ENCODE measurements at regions of chr9 and their contacts with region 1.

Region 1: GRCh38 chr9:129036241-129036922 is at the start of gene MIGA2:
- DNase-seq: peak; percentile 97
- H3K4me3 Mint-ChIP-seq: peak within 1 kb of the TSS; percentile 98
- H3K27ac Mint-ChIP-seq: peak within 1 kb of the TSS; percentile 19
- H3K4me1 Mint-ChIP-seq: peaks cover 26% of the 10 kb centered on the region
- H3K27me3 Mint-ChIP-seq: no peaks in the 10 kb centered on the region
- total RNA-seq, gene MIGA2: 26.1 to 26.5 TPM

Region 2: GRCh38 chr9:128669786-128670185 is 366.6 kb before region 1 on chr9:
- CTCF ChIA-PET with region 1: no interaction called
- POLR2A ChIA-PET with region 1: no interaction called
- intact Hi-C with region 1: no loop called
- DNase-seq: no peak
- H3K4me3 Mint-ChIP-seq: no peak overlapping the region
- H3K27ac Mint-ChIP-seq: no peak overlapping the region
- H3K4me1 Mint-ChIP-seq: peaks cover 2% of the 10 kb centered on the region
- H3K27me3 Mint-ChIP-seq: no peaks in the 10 kb centered on the region

Region 3: GRCh38 chr9:129080602-129081387 is 44.4 kb after region 1 on chr9 and contains the start of gene DOLPP1:
- CTCF ChIA-PET with region 1: no interaction called
- POLR2A ChIA-PET with region 1: no interaction called
- intact Hi-C with region 1: loop called (anchors 1 kb)
- DNase-seq: peak; percentile 99
- H3K4me3 Mint-ChIP-seq: peak within 1 kb of the TSS; percentile 83
- H3K27ac Mint-ChIP-seq: peak within 1 kb of the TSS; percentile 42
- H3K4me1 Mint-ChIP-seq: peaks cover 17% of the 10 kb centered on the region
- H3K27me3 Mint-ChIP-seq: no peaks in the 10 kb centered on the region
- total RNA-seq, gene DOLPP1: 13.9 to 15.3 TPM

Region 4: GRCh38 chr9:129110740-129111527 is 74.6 kb after region 1 on chr9 and contains the starts of genes CRAT and PTPA:
- CTCF ChIA-PET with region 1: no interaction called
- POLR2A ChIA-PET with region 1: interaction called, 4 read pairs
- intact Hi-C with region 1: loop called (anchors 2 kb)
- DNase-seq: peak; percentile 98
- H3K4me3 Mint-ChIP-seq: peak within 1 kb of the TSS; percentile 94
- H3K27ac Mint-ChIP-seq: peak within 1 kb of the TSS; percentile 97
- H3K4me1 Mint-ChIP-seq: peaks cover 34% of the 10 kb centered on the region
- H3K27me3 Mint-ChIP-seq: no peaks in the 10 kb centered on the region
- total RNA-seq, gene CRAT: 16.0 to 16.4 TPM
- total RNA-seq, gene PTPA: 74.6 to 76.3 TPM

Region 5: GRCh38 chr9:129626079-129626624 is 589.8 kb after region 1 on chr9 and contains the start of gene NTMT1:
- CTCF ChIA-PET with region 1: no interaction called
- POLR2A ChIA-PET with region 1: no interaction called
- intact Hi-C with region 1: loop called (anchors 2 kb)
- DNase-seq: peak; percentile 95
- H3K4me3 Mint-ChIP-seq: peak within 1 kb of the TSS; percentile 77
- H3K27ac Mint-ChIP-seq: peak within 1 kb of the TSS; percentile 91
- H3K4me1 Mint-ChIP-seq: peaks cover 58% of the 10 kb centered on the region
- H3K27me3 Mint-ChIP-seq: peaks cover 9% of the 10 kb centered on the region
- total RNA-seq, gene NTMT1: 59.9 to 64.6 TPM